HepG2 (cell line): ENCODE measurements at regions of chr20 and their contacts with region 1.

Region 1: DNA sequence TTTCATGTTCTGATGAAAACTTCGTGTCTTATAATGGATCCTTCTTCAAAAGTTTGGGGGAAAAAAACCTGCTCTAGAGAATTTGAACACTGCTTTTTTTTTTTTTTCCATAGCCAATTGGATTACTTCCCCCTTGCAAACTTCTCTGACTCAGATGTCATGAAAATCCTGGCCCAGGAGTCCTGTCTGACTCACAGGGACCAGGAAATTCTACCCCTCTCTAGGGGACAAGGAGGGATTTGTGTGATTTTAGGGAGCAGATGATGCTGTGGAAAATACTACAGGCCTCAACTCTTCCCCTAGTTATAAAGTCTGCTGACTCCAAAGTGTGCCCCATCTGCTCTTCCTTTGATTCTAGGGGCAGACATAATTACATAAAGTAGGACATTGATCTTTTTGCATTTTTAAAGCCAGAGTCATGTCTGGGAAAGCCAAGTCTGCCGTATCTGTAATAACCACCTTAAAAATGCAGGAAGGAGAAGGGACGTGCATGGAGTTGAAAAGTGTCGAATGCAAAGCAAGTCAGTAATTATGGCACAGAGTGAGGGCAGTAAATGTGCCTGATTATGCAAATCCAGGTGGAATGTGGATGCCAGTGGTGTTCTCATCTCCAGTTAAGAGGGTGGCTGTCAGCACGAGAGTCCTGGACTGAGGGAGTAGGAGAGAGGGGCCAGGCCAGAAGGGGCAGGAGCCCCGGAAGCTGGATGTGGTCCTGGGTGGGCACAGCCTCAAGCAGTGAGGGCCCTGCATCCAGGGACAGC is 144.3 kb upstream of the SULF2 start:
- DNase-seq: no peak
- ATAC-seq: no peak
- H3K4me3 ChIP-seq: no peak overlapping the region
- H3K27ac ChIP-seq: no peak overlapping the region
- H3K4me1 ChIP-seq: no peaks in the 10 kb centered on the region
- H3K27me3 ChIP-seq: peaks cover 0 to 8% of the 10 kb centered on the region in 2 experiments; a peak in 3 of 5 replicates
- CTCF ChIP-seq: no peak
- EP300 ChIP-seq: no peak
- POLR2A ChIP-seq: no peak
- RAD21 ChIP-seq: no peak

Region 2: GRCh38 chr20:47875714-47875998 is 53.9 kb before region 1 on chr20:
- CTCF ChIA-PET with region 1: no interaction called
- POLR2A ChIA-PET with region 1: no interaction called
- in situ Hi-C with region 1: no loop called
- intact Hi-C with region 1: loop called (anchors 2 kb)
- DNase-seq: no peak
- ATAC-seq: no peak
- H3K4me3 ChIP-seq: no peak overlapping the region
- H3K27ac ChIP-seq: no peak overlapping the region
- H3K4me1 ChIP-seq: peaks cover 11% of the 10 kb centered on the region
- H3K27me3 ChIP-seq: peaks cover 5 to 51% of the 10 kb centered on the region in 2 experiments; a peak in 4 of 5 replicates
- CTCF ChIP-seq: no peak
- EP300 ChIP-seq: no peak
- POLR2A ChIP-seq: no peak
- RAD21 ChIP-seq: no peak

Region 3: GRCh38 chr20:47887480-47888099 is 42.0 kb before region 1 on chr20:
- CTCF ChIA-PET with region 1: no interaction called
- POLR2A ChIA-PET with region 1: no interaction called
- in situ Hi-C with region 1: no loop called
- intact Hi-C with region 1: no loop called
- DNase-seq: no peak
- ATAC-seq: no peak
- H3K4me3 ChIP-seq: no peak overlapping the region
- H3K27ac ChIP-seq: no peak overlapping the region
- H3K4me1 ChIP-seq: peaks cover 20% of the 10 kb centered on the region
- H3K27me3 ChIP-seq: peaks cover 2 to 35% of the 10 kb centered on the region in 2 experiments; a peak in 4 of 5 replicates
- CTCF ChIP-seq: no peak
- EP300 ChIP-seq: no peak
- POLR2A ChIP-seq: no peak
- RAD21 ChIP-seq: no peak